ENCODE measurements at regions of chr22 and their contacts with region 1.

Region 1: GRCh38 chr22:44026630-44027511 is 2.8 kb downstream of the PARVB start:
- DNase-seq: peak; percentile 96
- ATAC-seq: peak; percentile 56
- H3K4me3 ChIP-seq: peak overlapping the region in 4 of 5 experiments; percentile 56 to 75 (median 68)
- H3K4me3 Mint-ChIP-seq: peak overlapping the region; percentile 92
- H3K27ac ChIP-seq: peak overlapping the region; percentile 99 to 100
- H3K27ac Mint-ChIP-seq: peak overlapping the region; percentile 97
- H3K4me1 ChIP-seq: peaks cover 64 to 72% of the 10 kb centered on the region in 2 donors
- H3K4me1 Mint-ChIP-seq: peaks cover 77% of the 10 kb centered on the region
- H3K27me3 ChIP-seq: no peaks in the 10 kb centered on the region
- H3K27me3 Mint-ChIP-seq: no peaks in the 10 kb centered on the region
- CTCF ChIP-seq: no peak

Region 2: DNA sequence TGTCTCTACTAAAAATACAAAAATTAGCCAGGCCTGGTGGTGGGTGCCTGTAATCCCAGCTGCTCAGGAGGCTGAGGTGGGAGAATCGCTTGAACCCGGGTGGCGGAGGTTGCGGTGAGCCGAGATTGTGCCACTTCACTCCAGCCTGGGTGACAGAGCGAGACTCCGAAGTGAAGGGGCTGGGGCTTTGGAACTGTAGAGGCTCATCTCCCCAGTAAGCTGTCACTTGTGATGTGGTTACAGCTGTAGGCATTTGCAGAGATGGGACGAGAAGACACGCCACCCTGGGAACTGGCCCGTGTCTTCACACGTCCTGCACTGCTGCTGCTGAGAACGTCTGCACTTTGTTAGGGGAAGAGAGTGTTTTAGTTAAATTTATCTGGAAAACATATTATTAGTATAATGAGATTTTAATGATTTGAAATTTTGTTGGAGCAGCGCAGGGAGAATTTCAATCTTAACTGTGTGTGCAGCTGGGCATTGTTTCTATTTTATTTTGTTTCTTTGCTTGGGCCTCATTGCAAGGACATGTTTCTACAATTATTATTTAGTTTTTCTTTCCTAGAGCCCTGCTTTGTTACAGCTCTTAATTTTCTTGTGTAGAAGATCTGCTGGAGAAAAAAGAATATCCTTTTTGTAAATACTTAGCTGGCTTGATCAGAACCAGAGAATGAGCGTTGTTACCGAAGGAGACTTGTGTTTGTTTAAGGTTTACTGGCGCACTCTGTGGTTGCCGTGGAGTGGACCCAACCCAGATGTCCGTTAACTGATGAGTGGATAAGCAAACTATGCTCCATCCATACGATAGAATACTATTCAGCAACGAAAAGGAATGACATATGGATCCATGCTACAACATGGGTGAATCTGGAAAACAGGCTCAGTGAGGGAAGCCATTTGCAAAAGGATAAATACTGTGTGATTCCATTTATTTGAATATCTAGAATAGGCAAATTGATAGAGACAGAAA is 15.7 kb after region 1 on chr22:
- CTCF ChIA-PET with region 1: interaction called, 6 read pairs
- POLR2A ChIA-PET with region 1: interaction called, 5 read pairs
- intact Hi-C with region 1: loop called (anchors 2 kb)
- DNase-seq: peak; percentile 76
- ATAC-seq: peak; percentile 92
- H3K4me3 ChIP-seq: no peak overlapping the region
- H3K4me3 Mint-ChIP-seq: peak overlapping the region; percentile 14
- H3K27ac ChIP-seq: peak overlapping the region; percentile 6 to 39
- H3K27ac Mint-ChIP-seq: peak overlapping the region; percentile 78
- H3K4me1 ChIP-seq: peaks cover 21 to 25% of the 10 kb centered on the region in 2 donors
- H3K4me1 Mint-ChIP-seq: peaks cover 57% of the 10 kb centered on the region
- H3K27me3 ChIP-seq: no peaks in the 10 kb centered on the region
- H3K27me3 Mint-ChIP-seq: no peaks in the 10 kb centered on the region
- CTCF ChIP-seq: no peak

Region 3: DNA sequence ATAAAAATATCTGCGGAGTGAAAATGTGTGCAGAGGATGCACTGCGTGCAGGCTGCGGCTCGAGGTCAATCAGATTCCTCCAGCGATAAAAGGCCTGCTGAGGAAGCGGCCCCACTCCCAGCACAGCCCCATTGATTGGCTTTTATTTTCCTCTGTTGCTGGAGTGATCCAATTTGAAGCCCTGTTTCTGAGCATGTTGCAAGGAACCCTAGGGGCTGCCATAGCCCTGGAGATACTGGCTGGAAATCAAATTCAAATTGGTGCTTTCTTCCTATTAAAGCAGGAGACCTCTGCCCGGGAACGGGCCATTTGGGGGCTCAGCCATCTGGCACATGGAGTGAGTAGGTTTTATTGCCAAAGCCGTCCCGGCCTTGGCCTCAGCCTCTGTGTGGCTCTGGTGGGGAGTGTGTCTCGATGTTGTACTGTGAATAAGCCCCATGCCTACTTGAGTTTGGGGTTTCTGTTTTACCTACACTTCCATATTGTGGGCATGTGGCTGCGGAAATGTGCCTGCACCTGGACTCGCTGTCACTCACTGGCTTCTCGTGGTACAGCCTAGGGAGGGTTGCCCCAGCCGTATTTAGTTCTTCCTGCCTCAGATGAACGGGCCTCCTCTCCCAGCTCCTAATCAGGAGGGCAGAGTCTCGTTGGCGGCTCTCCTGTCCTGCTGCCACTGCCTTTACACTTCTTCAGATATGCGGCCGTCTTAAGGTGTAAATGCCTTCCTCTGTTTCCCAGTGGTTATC is 22.8 kb after region 1 on chr22:
- CTCF ChIA-PET with region 1: interaction called, 3 read pairs
- POLR2A ChIA-PET with region 1: interaction called, 4 read pairs
- intact Hi-C with region 1: loop called (anchors 1 kb)
- DNase-seq: peak; percentile 37
- ATAC-seq: no peak
- H3K4me3 ChIP-seq: no peak overlapping the region
- H3K4me3 Mint-ChIP-seq: peak overlapping the region; percentile 55
- H3K27ac ChIP-seq: no peak overlapping the region
- H3K27ac Mint-ChIP-seq: no peak overlapping the region
- H3K4me1 ChIP-seq: peaks cover 17 to 19% of the 10 kb centered on the region in 2 donors
- H3K4me1 Mint-ChIP-seq: peaks cover 60% of the 10 kb centered on the region
- H3K27me3 ChIP-seq: no peaks in the 10 kb centered on the region
- H3K27me3 Mint-ChIP-seq: no peaks in the 10 kb centered on the region
- CTCF ChIP-seq: no peak

Region 4: DNA sequence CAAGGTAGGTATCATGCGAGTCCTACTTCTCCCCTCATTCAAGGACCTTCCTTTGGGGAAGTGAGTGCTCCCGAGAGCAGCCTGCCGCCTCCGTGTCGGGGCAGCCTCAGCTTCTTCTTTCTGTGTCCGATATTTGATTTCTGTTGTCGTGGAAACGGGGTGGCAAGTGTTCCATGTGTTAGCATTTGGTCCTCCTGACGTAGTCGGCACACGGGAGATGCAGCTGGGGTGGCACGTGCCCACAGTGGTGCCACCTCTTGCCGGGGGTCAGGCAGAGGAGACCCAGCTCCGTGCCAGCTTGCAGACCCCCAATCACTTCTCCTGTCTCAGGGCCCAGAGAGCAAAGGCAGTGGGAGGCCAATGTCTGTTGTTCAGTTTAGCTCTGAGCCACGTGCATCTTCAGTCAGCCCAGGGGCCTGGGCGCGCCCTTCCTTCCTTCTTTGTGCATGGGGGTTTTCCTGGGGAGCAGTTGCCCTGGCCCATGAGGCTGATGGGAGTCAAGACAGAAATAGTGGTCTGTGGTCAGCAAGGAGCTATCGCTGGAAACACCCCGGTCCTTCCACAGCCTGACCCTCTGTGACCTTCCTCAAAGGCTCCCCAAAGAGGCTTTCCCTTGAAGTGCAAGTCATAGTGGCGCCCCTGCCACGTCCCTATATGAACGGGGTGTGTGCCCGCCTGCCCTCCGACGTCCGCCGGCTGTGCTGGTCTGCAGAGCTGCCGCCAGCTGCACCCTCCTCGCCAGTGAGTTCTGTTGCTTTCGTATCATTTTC is 41.7 kb after region 1 on chr22:
- CTCF ChIA-PET with region 1: interaction called, 5 read pairs
- POLR2A ChIA-PET with region 1: interaction called, 11 read pairs
- intact Hi-C with region 1: loop called (anchors 1 kb)
- DNase-seq: peak; percentile 96
- ATAC-seq: peak; percentile 71
- H3K4me3 ChIP-seq: peak overlapping the region in 4 of 5 experiments; percentile 12 to 48 (median 26)
- H3K4me3 Mint-ChIP-seq: peak overlapping the region; percentile 89
- H3K27ac ChIP-seq: peak overlapping the region; percentile 91 to 94
- H3K27ac Mint-ChIP-seq: peak overlapping the region; percentile 99
- H3K4me1 ChIP-seq: peaks cover 39% of the 10 kb centered on the region in 2 donors
- H3K4me1 Mint-ChIP-seq: peaks cover 60% of the 10 kb centered on the region
- H3K27me3 ChIP-seq: no peaks in the 10 kb centered on the region
- H3K27me3 Mint-ChIP-seq: no peaks in the 10 kb centered on the region
- CTCF ChIP-seq: no peak

Region 5: GRCh38 chr22:44103735-44104480 is 77.0 kb after region 1 on chr22:
- CTCF ChIA-PET with region 1: no interaction called
- POLR2A ChIA-PET with region 1: no interaction called
- intact Hi-C with region 1: no loop called
- DNase-seq: no peak
- ATAC-seq: no peak
- H3K4me3 ChIP-seq: no peak overlapping the region
- H3K4me3 Mint-ChIP-seq: no peak overlapping the region
- H3K27ac ChIP-seq: no peak overlapping the region
- H3K27ac Mint-ChIP-seq: no peak overlapping the region
- H3K4me1 ChIP-seq: no peaks in the 10 kb centered on the region
- H3K4me1 Mint-ChIP-seq: peaks cover 4% of the 10 kb centered on the region
- H3K27me3 ChIP-seq: no peaks in the 10 kb centered on the region
- H3K27me3 Mint-ChIP-seq: no peaks in the 10 kb centered on the region
- CTCF ChIP-seq: no peak

Region 6: GRCh38 chr22:44180706-44181032 is 153.8 kb after region 1 on chr22 and contains the start of gene PARVG:
- CTCF ChIA-PET with region 1: no interaction called
- POLR2A ChIA-PET with region 1: interaction called, 6 read pairs
- intact Hi-C with region 1: loop called (anchors 2 kb)
- DNase-seq: peak; percentile 86
- ATAC-seq: peak; percentile 67
- H3K4me3 ChIP-seq: peak within 1 kb of the TSS; percentile 70 to 98 (median 92)
- H3K4me3 Mint-ChIP-seq: peak within 1 kb of the TSS; percentile 94
- H3K27ac ChIP-seq: peak within 1 kb of the TSS; percentile 93 to 95
- H3K27ac Mint-ChIP-seq: peak within 1 kb of the TSS; percentile 95
- H3K4me1 ChIP-seq: peaks cover 19 to 39% of the 10 kb centered on the region in 2 donors
- H3K4me1 Mint-ChIP-seq: peaks cover 36% of the 10 kb centered on the region
- H3K27me3 ChIP-seq: no peaks in the 10 kb centered on the region
- H3K27me3 Mint-ChIP-seq: no peaks in the 10 kb centered on the region
- CTCF ChIP-seq: no peak
- total RNA-seq, gene PARVG: 247 and 271 TPM in 2 replicates

Measured in B cell (primary cell).